ENCODE measurements at regions of chr1 and their contacts with region 1.

Region 1: GRCh38 chr1:65067491-65068201 is 80.4 kb upstream of the AK4 start:
- DNase-seq: peak; percentile 25
- H3K4me3 Mint-ChIP-seq: peak overlapping the region; percentile 89
- H3K27ac Mint-ChIP-seq: peak overlapping the region; percentile 95
- H3K4me1 Mint-ChIP-seq: peaks cover 41% of the 10 kb centered on the region
- H3K27me3 Mint-ChIP-seq: no peaks in the 10 kb centered on the region

Region 2: DNA sequence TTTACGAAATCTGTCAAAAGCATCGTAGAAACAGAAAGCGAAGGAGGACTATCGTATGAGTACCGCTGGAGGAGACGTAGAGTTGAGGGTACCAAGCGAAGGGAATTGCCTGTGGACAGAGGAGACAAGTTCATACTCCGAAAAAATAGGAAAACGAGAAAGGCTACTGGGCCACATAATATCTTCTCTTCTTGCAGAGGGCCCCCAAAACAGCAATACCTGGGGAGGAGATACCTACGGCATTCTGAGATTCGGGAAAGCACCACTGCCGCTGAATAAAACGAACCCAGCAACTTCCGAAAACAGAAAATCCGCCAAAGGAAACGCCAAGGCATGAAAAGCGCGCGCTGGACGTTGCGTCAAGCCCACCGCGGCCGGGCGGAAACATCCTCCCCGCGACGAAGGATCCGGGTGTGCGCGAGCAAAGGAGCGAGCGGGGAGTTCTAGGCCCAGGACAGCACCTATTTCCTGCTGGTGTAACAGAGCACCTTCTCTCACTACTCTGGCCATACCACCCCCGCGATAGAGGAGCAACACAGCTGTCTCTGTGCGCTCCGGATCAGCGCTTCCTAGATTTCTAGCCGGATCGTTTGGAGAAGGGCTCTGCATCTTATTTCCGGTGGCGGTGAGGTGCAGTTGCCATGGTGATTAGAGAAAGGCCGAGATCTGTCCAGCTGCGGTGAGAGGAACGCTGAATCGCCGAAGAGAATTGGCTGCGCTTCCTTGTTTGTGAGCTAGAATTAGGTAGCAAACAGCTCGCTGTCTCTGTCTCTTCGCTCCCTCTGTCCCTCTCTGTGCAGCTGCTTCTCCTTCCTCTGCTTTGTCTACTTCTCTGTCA is 1544.5 kb before region 1 on chr1 and contains the starts of genes EFCAB7 and ITGB3BP:
- intact Hi-C with region 1: loop called (anchors 2 kb)
- DNase-seq: peak; percentile 80
- H3K4me3 Mint-ChIP-seq: peak within 1 kb of the TSS; percentile 99
- H3K27ac Mint-ChIP-seq: peak within 1 kb of the TSS; percentile 94
- H3K4me1 Mint-ChIP-seq: peaks cover 53% of the 10 kb centered on the region
- H3K27me3 Mint-ChIP-seq: no peaks in the 10 kb centered on the region
- total RNA-seq, gene EFCAB7: 6.4 and 6.7 TPM in 2 replicates
- total RNA-seq, gene ITGB3BP: 44.1 and 49.8 TPM in 2 replicates

Region 3: DNA sequence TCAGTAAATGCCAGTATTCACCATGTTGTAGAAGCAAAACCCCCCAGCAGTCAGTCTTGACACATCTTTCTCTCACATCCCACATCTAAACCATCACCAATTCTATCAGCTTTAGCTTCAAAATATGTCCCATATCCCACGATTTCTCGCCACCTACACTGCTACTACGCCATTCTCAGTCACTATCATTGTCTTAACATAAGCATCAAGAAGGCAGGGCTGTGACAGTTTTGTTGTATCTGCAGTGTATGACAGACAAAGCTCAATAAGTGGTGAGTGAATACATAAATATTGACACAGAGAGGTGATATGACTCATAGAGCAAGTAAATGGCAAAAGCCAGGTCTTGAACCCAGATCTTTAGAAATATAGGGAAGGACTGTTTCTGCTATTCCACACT is 161.2 kb before region 1 on chr1:
- intact Hi-C with region 1: loop called (anchors 5 kb)
- DNase-seq: no peak
- H3K4me3 Mint-ChIP-seq: peak overlapping the region; percentile 34
- H3K27ac Mint-ChIP-seq: peak overlapping the region; percentile 78
- H3K4me1 Mint-ChIP-seq: peaks cover 54% of the 10 kb centered on the region
- H3K27me3 Mint-ChIP-seq: no peaks in the 10 kb centered on the region

Region 4: GRCh38 chr1:65148548-65149350 is 81.1 kb after region 1 on chr1:
- intact Hi-C with region 1: loop called (anchors 1 kb)
- DNase-seq: peak; percentile 55
- H3K4me3 Mint-ChIP-seq: peak overlapping the region; percentile 94
- H3K27ac Mint-ChIP-seq: peak overlapping the region; percentile 90
- H3K4me1 Mint-ChIP-seq: peaks cover 52% of the 10 kb centered on the region
- H3K27me3 Mint-ChIP-seq: peaks cover 7% of the 10 kb centered on the region

Region 5: GRCh38 chr1:65419681-65420589 is 352.3 kb after region 1 on chr1:
- intact Hi-C with region 1: loop called (anchors 2 kb)
- DNase-seq: peak; percentile 98
- H3K4me3 Mint-ChIP-seq: no peak overlapping the region
- H3K27ac Mint-ChIP-seq: peak overlapping the region; percentile 90
- H3K4me1 Mint-ChIP-seq: peaks cover 32% of the 10 kb centered on the region
- H3K27me3 Mint-ChIP-seq: peaks cover 5% of the 10 kb centered on the region